BJ (cell line): ENCODE measurements at regions of chr20 and their contacts with region 1.

Region 1: DNA sequence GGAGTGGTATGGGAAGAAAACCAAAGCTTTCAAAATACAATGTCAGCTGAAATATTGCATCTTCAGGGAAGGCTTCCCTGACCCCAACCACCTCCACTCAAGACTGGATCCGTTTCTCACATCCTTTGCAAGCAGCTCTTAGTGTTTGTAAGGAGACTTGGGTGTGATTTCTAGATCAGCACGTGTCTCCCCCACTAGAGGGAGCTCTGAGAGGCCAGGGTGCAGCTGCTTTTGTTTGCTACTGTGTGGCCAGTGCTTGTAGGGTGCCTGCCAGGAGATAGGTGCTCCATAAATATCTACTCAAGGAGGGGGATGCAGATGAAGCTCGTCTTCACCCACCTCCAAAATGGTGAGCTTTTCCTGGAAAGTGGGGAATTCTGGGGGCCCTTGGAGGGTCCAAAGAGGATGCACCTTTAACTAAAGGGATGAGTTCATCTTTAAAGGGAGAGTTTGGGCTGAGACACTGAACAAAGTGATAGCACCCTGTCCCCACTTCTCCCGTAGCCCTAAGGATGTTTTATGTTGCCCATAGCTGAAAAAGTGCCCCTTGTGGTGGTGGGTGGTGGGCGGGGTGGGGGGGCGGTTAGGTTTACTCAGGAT is 52.6 kb upstream of the MAFB start:
- DNase-seq: no peak
- H3K4me3 ChIP-seq: no peak overlapping the region
- H3K27me3 ChIP-seq: peaks cover 3% of the 10 kb centered on the region
- CTCF ChIP-seq: peak; percentile 73

Region 2: DNA sequence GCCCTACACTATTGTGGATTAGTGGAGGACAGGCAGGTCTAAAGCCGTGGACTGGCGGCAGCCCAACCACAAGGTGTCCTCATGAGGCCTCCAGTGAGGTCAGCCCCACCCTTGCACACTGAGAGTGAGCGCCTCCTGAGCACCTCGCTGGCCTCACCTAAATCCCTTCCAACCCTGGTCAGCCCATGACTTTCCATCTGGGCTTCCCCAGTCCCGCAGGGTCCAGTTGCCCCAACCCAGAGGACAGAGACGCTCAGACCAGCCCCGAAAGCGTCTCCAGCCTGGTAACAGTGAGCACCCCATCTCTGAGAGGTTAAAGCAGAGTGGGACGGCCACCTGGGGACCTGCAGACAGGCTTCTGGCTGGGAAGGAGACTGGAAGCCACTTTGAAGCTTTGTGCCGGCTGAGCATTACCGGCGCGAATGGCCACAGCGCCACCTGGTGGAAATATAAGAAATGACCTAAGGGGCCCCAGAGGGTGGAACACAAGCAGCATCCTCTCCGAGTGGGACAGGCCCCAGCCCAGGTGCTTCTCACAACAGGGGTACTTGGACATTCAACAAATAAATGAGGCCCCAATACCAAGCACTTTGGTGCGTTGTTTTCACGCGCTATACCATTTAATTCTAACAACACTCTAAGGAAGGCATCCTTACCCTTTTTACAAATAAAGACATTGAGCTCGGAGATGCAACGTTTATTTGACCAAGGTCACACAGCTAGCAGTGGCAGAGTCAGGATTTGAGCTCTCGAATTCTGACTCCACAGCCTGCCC is 221.3 kb after region 1 on chr20:
- CTCF ChIA-PET with region 1: interaction called, 66 read pairs
- POLR2A ChIA-PET with region 1: no interaction called
- DNase-seq: no peak
- H3K4me3 ChIP-seq: no peak overlapping the region
- H3K27me3 ChIP-seq: no peaks in the 10 kb centered on the region; the same call in 1 of the 2 replicates
- CTCF ChIP-seq: peak; percentile 84